Activated B cell treated with CpG ODN at 0.5 μM for 24 hours (primary cell): ENCODE measurements at regions of chr6 and their contacts with region 1.

Region 1: GRCh38 chr6:73585566-73586415 is 65.0 kb upstream of the EEF1A1 start:
- DNase-seq: no peak
- ATAC-seq: peak; percentile 76
- H3K4me3 Mint-ChIP-seq: peak overlapping the region; percentile 79
- H3K27ac Mint-ChIP-seq: peak overlapping the region; percentile 99
- H3K4me1 Mint-ChIP-seq: peaks cover 38% of the 10 kb centered on the region
- H3K27me3 Mint-ChIP-seq: no peaks in the 10 kb centered on the region
- CTCF ChIP-seq: no peak

Region 2: DNA sequence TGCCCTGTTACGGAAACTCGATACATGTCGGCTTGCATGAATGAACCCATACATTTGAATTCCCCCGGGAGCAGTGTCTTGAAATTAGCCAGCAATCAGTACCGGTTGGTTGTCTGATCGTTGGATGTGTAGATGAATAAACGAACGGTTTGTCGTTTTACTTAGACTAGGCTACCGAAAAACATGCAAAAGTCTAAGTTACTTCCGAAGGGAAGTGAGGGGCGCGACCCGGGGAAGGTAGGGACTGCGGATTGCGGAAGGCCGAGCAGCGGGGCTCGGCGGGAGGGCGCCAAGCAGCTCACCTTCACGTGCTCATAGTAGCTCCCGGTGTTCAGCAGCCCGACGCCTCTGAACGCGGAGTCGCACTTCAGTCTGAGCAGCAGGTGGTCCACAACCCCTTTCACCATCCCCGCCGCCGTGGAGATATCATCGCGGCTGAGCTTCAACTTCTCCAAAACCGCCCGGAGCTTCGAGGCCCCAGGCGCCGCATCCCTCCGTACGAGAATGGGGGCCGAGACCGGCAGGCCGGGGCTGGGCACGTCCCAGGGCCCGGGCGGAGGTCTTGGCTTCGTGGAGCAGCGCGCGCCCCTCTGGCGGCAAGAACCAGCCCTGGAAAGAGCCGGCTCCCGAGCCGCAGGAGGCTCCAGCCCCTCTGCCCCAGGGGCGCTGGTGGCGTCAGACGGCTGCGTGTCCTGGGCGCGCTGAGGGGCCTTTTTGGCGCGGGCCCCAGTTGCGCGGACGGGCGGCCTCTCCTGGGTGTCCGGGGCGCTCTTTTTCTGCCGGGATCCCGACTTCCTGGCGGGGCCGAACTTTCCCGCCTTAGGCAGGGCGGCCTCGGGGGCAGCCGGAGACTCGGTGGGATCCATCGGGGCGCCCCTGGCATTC is 134.3 kb before region 1 on chr6:
- CTCF ChIA-PET with region 1: interaction called, 3 read pairs
- POLR2A ChIA-PET with region 1: interaction called, 11 read pairs
- intact Hi-C with region 1: loop called (anchors 5 kb)
- DNase-seq: peak; percentile 54
- ATAC-seq: peak; percentile 59
- H3K4me3 Mint-ChIP-seq: peak overlapping the region; percentile 93
- H3K27ac Mint-ChIP-seq: peak overlapping the region; percentile 91
- H3K4me1 Mint-ChIP-seq: peaks cover 22% of the 10 kb centered on the region
- H3K27me3 Mint-ChIP-seq: no peaks in the 10 kb centered on the region
- CTCF ChIP-seq: no peak